ENCODE measurements at regions of chr3 and their contacts with region 1.

Region 1: GRCh38 chr3:51498876-51499738 is 708 bp downstream of the DCAF1 start:
- DNase-seq: peak; percentile 52 to 90 (median 73)
- ATAC-seq: peak; percentile 58
- H3K4me3 ChIP-seq: peak overlapping the region; percentile 84
- H3K4me3 Mint-ChIP-seq: peak overlapping the region; percentile 87 to 100 (median 98)
- H3K27ac ChIP-seq: peak overlapping the region; percentile 90
- H3K27ac Mint-ChIP-seq: peak overlapping the region; percentile 90 to 99 (median 94)
- H3K4me1 ChIP-seq: peaks cover 10 to 14% of the 10 kb centered on the region in 2 donors
- H3K4me1 Mint-ChIP-seq: peaks cover 4 to 38% (median 35%) of the 10 kb centered on the region in 7 donors
- H3K27me3 ChIP-seq: no peaks in the 10 kb centered on the region
- H3K27me3 Mint-ChIP-seq: peaks cover 0 to 2% (median 0%) of the 10 kb centered on the region in 5 donors

Region 2: GRCh38 chr3:51538459-51539290 is 39.6 kb after region 1 on chr3 and contains the start of gene RAD54L2:
- CTCF ChIA-PET with region 1: interaction called, 5 read pairs
- POLR2A ChIA-PET with region 1: interaction called, 25 read pairs
- intact Hi-C with region 1: loop called (anchors 1 kb)
- DNase-seq: peak; percentile 49 to 87 (median 69)
- ATAC-seq: peak; percentile 96
- H3K4me3 ChIP-seq: peak within 1 kb of the TSS; percentile 68
- H3K4me3 Mint-ChIP-seq: peak within 1 kb of the TSS; percentile 93 to 96 (median 94)
- H3K27ac ChIP-seq: peak within 1 kb of the TSS; percentile 80
- H3K27ac Mint-ChIP-seq: peak within 1 kb of the TSS; percentile 88 to 96 (median 92)
- H3K4me1 ChIP-seq: peaks cover 11 to 18% of the 10 kb centered on the region in 2 donors
- H3K4me1 Mint-ChIP-seq: peaks cover 21 to 57% (median 43%) of the 10 kb centered on the region in 7 donors
- H3K27me3 ChIP-seq: no peaks in the 10 kb centered on the region
- H3K27me3 Mint-ChIP-seq: no peaks in the 10 kb centered on the region
- total RNA-seq, gene RAD54L2: 38.1 to 45.2 (median 40.1) TPM

Region 3: GRCh38 chr3:51670823-51671733 is 172.0 kb after region 1 on chr3 and contains the start of gene TEX264:
- CTCF ChIA-PET with region 1: interaction called, 67 read pairs
- POLR2A ChIA-PET with region 1: interaction called, 48 read pairs
- intact Hi-C with region 1: loop called (anchors 1 kb)
- DNase-seq: peak; percentile 90 to 98 (median 95)
- ATAC-seq: peak; percentile 90
- H3K4me3 ChIP-seq: peak within 1 kb of the TSS; percentile 94
- H3K4me3 Mint-ChIP-seq: peak within 1 kb of the TSS; percentile 89 to 95 (median 92)
- H3K27ac ChIP-seq: peak within 1 kb of the TSS; percentile 85
- H3K27ac Mint-ChIP-seq: peak within 1 kb of the TSS; percentile 24 to 97 (median 93)
- H3K4me1 ChIP-seq: peaks cover 53 to 60% of the 10 kb centered on the region in 2 donors
- H3K4me1 Mint-ChIP-seq: peaks cover 59 to 82% (median 73%) of the 10 kb centered on the region in 7 donors
- H3K27me3 ChIP-seq: no peaks in the 10 kb centered on the region
- H3K27me3 Mint-ChIP-seq: no peaks in the 10 kb centered on the region
- total RNA-seq, gene TEX264: 34.4 to 65.0 (median 41.7) TPM

Region 4: DNA sequence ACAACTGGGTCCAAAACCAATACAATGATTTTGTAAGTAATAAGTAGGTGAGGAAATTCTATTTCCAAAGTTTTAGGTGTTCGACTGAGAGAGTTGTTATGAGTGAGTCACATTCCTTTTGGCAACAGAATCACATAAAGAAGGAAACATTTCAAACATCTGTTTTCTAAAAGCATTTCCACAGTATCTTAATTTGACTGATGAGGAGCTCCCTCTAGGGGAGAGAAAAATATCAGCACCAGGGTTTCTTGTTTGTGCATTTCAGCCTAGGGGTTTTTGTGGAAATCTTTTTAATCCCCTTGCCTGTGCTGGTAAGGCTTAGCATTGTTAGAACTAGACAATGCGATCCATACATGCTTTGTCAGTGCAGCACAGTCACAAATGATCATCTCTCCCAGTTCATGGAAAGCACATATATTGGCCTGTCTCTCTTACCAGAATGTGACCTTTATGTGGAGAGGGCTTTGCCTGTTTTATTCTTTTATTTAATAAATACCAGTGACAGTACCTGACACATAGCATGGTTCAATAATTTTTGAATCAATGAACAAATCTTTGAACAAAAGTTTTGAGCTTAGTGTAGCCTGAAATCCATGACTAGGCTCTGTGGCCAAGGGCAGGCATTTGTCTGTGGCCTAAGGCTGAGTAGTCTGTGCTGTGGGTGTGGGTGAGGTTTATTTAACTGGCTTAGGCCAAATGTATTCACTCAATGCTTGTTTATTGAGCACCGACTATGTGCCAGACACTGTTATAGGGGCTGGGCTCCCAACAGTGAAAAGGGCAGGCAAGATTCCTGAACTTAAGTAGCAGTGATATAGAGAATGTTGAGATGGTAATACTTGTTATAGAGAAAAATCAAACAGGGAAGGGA is 301.0 kb after region 1 on chr3:
- CTCF ChIA-PET with region 1: interaction called, 49 read pairs
- POLR2A ChIA-PET with region 1: interaction called, 5 read pairs
- intact Hi-C with region 1: loop called (anchors 1 kb)
- DNase-seq: peak in 7 of 9 donors; percentile 23 to 66 (median 55)
- ATAC-seq: peak; percentile 70
- H3K4me3 ChIP-seq: no peak overlapping the region
- H3K4me3 Mint-ChIP-seq: no peak overlapping the region
- H3K27ac ChIP-seq: no peak overlapping the region
- H3K27ac Mint-ChIP-seq: no peak overlapping the region
- H3K4me1 ChIP-seq: no peaks in the 10 kb centered on the region
- H3K4me1 Mint-ChIP-seq: peaks cover 4 to 48% (median 13%) of the 10 kb centered on the region in 7 donors
- H3K27me3 ChIP-seq: no peaks in the 10 kb centered on the region
- H3K27me3 Mint-ChIP-seq: peaks cover 5 to 16% (median 13%) of the 10 kb centered on the region in 5 donors

Region 5: GRCh38 chr3:51836606-51837005 is 337.5 kb after region 1 on chr3:
- CTCF ChIA-PET with region 1: no interaction called
- POLR2A ChIA-PET with region 1: no interaction called
- intact Hi-C with region 1: no loop called
- DNase-seq: no peak
- ATAC-seq: no peak
- H3K4me3 ChIP-seq: no peak overlapping the region
- H3K4me3 Mint-ChIP-seq: no peak overlapping the region
- H3K27ac ChIP-seq: no peak overlapping the region
- H3K27ac Mint-ChIP-seq: no peak overlapping the region
- H3K4me1 ChIP-seq: no peaks in the 10 kb centered on the region
- H3K4me1 Mint-ChIP-seq: peaks cover 0 to 2% (median 0%) of the 10 kb centered on the region in 7 donors
- H3K27me3 ChIP-seq: peaks cover 0 to 4% of the 10 kb centered on the region in 2 donors
- H3K27me3 Mint-ChIP-seq: peaks cover 24 to 43% (median 33%) of the 10 kb centered on the region in 5 donors

Region 6: GRCh38 chr3:52154117-52155094 is 655.3 kb after region 1 on chr3 and contains the start of gene POC1A:
- CTCF ChIA-PET with region 1: no interaction called
- POLR2A ChIA-PET with region 1: no interaction called
- intact Hi-C with region 1: loop called in 1 of 2 experiments (anchors 10 kb)
- DNase-seq: peak; percentile 73 to 90 (median 82)
- ATAC-seq: peak; percentile 92
- H3K4me3 ChIP-seq: peak within 1 kb of the TSS; percentile 98
- H3K4me3 Mint-ChIP-seq: peak within 1 kb of the TSS; percentile 88 to 98 (median 96)
- H3K27ac ChIP-seq: peak within 1 kb of the TSS; percentile 85
- H3K27ac Mint-ChIP-seq: peak within 1 kb of the TSS; percentile 87 to 98 (median 94)
- H3K4me1 ChIP-seq: peaks cover 4 to 6% of the 10 kb centered on the region in 2 donors
- H3K4me1 Mint-ChIP-seq: peaks cover 5 to 22% (median 6%) of the 10 kb centered on the region in 7 donors
- H3K27me3 ChIP-seq: no peaks in the 10 kb centered on the region
- H3K27me3 Mint-ChIP-seq: peaks cover 0 to 1% (median 0%) of the 10 kb centered on the region in 5 donors
- total RNA-seq, gene POC1A: 0.58 to 19.7 (median 1.2) TPM